ENCODE measurements at regions of chrX and their contacts with region 1.

Region 1: DNA sequence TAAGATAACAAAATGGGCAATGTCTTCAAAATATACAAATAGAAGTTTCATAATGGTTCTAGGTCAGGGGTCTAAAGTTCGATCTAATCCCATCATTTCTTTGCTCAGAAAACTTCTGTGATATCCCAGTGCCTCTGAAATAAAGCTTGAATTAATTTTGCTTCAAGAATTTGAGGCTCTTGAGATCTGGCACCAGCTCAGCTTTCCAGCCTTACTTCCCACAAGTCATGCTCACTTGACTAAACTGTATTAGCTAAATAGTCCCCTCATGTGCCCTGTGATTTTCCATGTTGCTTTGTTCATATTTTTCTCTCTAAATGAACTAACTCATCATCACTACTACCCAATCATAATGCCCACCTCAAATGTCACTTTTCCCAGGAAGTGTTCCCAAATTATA is 50.8 kb upstream of the MBNL3 start:
- DNase-seq: no peak
- ATAC-seq: no peak
- H3K4me3 ChIP-seq: no peak overlapping the region
- H3K27ac ChIP-seq: no peak overlapping the region
- H3K4me1 ChIP-seq: no peaks in the 10 kb centered on the region
- H3K27me3 ChIP-seq: peaks cover 0 to 10% (median 0%) of the 10 kb centered on the region in 9 donors
- CTCF ChIP-seq: no peak
- POLR2A ChIP-seq: no peak

Region 2: GRCh38 chrX:131746474-131746968 is 793.1 kb before region 1 on chrX:
- intact Hi-C with region 1: loop called in 1 of 10 experiments (anchors 10 kb)
- DNase-seq: peak in 2 of 5 donors; percentile 84 to 87
- ATAC-seq: peak in 2 of 4 donors; percentile 84 to 87
- H3K4me3 ChIP-seq: peak overlapping the region in 10 of 12 donors; percentile 4 to 66 (median 34)
- H3K27ac ChIP-seq: peak overlapping the region in 10 of 12 donors; percentile 22 to 92 (median 68)
- H3K4me1 ChIP-seq: peaks cover 0 to 5% (median 0%) of the 10 kb centered on the region in 12 donors
- H3K27me3 ChIP-seq: no peaks in the 10 kb centered on the region
- CTCF ChIP-seq: peak in 4 of 12 donors; percentile 8 to 58 (median 38)
- POLR2A ChIP-seq: no peak

Region 3: GRCh38 chrX:132740316-132741123 is 200.9 kb after region 1 on chrX:
- intact Hi-C with region 1: no loop called
- DNase-seq: no peak
- ATAC-seq: no peak
- H3K4me3 ChIP-seq: no peak overlapping the region
- H3K27ac ChIP-seq: no peak overlapping the region
- H3K4me1 ChIP-seq: no peaks in the 10 kb centered on the region
- H3K27me3 ChIP-seq: peaks cover 0 to 37% (median 0%) of the 10 kb centered on the region in 9 donors
- CTCF ChIP-seq: peak; percentile 25 to 60 (median 44)
- POLR2A ChIP-seq: no peak